Natural killer cell (primary cell): ENCODE measurements at regions of chr1 and their contacts with region 1.

Region 1: DNA sequence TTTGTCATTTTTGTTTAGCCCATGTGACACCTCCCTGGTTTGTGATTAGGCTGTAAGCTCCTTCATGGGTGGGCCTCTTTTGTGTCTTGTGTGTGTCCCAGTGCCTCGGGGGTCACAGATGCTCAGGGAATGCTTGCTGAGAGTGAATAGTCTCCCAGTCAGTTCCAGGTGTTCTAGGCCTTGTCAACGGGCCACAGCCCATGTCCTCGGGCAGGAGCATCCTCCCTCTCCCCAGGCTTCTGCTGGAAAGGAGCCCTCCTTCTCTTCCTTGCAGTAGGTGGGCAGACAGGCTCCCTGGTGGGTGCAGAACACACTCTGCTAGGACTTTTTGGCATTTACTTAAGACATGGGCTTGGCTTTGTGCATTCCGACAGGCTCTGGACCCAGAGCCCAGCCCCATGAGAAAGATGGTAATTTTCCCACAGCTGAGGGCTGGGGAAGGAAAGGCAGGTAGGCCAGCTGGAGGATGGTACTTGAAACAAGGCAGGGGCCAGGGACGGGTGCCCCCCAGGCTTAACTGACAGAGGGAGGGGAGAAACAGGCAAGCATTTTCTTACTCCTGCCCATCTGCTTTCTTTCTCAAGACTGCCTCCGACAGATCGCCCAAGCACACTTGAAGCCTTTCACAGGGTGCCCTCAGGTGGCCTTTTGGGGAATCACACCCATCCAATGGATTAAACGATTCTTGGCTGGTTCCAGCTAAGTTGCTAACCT is 7.1 kb upstream of the CPLANE2 start:
- DNase-seq: peak; percentile 67 to 87
- ATAC-seq: peak; percentile 86 to 97 (median 92)
- H3K4me3 ChIP-seq: no peak overlapping the region
- H3K4me3 Mint-ChIP-seq: no peak overlapping the region
- H3K27ac ChIP-seq: no peak overlapping the region
- H3K27ac Mint-ChIP-seq: no peak overlapping the region
- H3K4me1 ChIP-seq: peaks cover 9% of the 10 kb centered on the region
- H3K4me1 Mint-ChIP-seq: peaks cover 3 to 13% of the 10 kb centered on the region in 2 donors
- H3K27me3 ChIP-seq: no peaks in the 10 kb centered on the region
- H3K27me3 Mint-ChIP-seq: no peaks in the 10 kb centered on the region
- CTCF ChIP-seq: peak; percentile 71

Region 2: GRCh38 chr1:16009030-16009709 is 234.9 kb before region 1 on chr1:
- intact Hi-C with region 1: loop called (anchors 2 kb)
- DNase-seq: peak; percentile 71 to 83
- ATAC-seq: peak; percentile 32 to 74 (median 66)
- H3K4me3 ChIP-seq: no peak overlapping the region
- H3K4me3 Mint-ChIP-seq: no peak overlapping the region
- H3K27ac ChIP-seq: no peak overlapping the region
- H3K27ac Mint-ChIP-seq: no peak overlapping the region
- H3K4me1 ChIP-seq: peaks cover 23% of the 10 kb centered on the region
- H3K4me1 Mint-ChIP-seq: peaks cover 0 to 15% of the 10 kb centered on the region in 2 donors
- H3K27me3 ChIP-seq: no peaks in the 10 kb centered on the region
- H3K27me3 Mint-ChIP-seq: no peaks in the 10 kb centered on the region
- CTCF ChIP-seq: peak; percentile 98

Region 3: DNA sequence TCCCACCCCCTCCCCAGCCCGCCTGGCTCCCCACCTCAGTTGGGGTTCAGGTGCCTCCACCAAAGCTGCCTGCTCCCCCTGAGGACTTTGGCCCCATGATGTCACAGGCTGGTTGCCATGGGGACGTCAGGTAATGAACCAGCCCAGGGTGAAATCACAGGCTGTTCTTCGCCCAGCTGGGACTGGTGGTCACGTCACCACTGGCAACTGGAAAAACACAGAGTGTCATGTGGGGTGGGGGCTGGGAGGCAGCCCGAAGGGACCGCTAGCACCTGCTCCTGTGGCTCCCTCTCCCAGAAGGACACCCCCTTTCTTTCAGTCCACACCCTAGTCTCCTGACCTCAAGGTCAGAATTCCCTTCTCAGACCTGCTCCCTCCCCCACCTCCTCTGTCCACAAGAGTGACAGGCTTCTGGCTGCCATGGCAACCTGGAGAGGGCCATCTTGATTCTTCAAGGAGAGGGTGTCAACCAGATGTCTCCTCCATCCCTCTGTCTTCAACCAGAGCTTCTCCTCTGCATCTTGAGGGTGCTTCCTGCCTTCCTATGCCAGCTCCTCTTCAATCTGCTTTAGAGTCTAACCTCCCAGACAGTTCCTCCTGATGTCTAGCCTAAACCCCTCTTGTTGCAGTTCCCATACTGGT is 176.8 kb before region 1 on chr1:
- intact Hi-C with region 1: no loop called
- DNase-seq: no peak
- ATAC-seq: no peak
- H3K4me3 ChIP-seq: no peak overlapping the region
- H3K4me3 Mint-ChIP-seq: no peak overlapping the region
- H3K27ac ChIP-seq: no peak overlapping the region
- H3K27ac Mint-ChIP-seq: no peak overlapping the region
- H3K4me1 ChIP-seq: peaks cover 34% of the 10 kb centered on the region
- H3K4me1 Mint-ChIP-seq: peaks cover 21 to 32% of the 10 kb centered on the region in 2 donors
- H3K27me3 ChIP-seq: no peaks in the 10 kb centered on the region
- H3K27me3 Mint-ChIP-seq: peaks cover 6 to 22% of the 10 kb centered on the region in 2 donors
- CTCF ChIP-seq: no peak

Region 4: DNA sequence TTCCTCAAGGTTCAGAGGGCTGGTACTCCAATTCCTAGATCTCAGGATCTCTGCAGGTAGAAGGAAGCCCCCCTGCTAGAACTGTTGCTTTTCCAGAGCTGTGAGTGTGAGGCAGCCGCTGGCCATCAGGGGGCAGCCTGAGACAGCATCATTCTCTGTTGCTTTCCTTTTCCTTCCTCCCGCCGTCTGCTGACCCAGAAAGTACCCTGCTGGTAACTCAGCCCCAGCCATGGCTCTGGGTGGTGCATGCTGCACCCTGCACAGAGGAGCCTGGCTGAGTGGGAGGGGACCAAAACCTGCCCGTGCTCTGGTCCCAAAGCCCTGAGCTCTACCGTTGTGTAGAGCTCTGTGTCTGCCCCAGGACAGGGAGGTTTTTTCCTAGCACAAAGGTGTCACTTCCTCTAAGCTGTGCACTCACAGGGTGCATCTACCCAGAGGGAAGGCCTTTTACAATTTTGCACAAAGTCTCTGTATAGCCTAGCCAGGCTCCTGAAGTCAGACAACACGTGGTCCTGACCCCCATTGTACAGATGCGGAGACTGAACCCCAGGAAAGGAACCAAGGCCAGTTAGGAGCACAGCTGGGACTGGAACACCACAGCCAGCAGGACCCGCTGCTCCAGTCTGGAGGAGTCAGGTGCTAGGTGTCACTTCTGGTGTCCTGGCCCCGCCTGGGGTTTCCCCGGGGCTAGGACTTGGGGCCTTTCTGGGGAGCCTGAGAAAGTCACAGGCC is 165.0 kb before region 1 on chr1:
- intact Hi-C with region 1: loop called (anchors 1 kb)
- DNase-seq: peak; percentile 64 to 88
- ATAC-seq: peak; percentile 80 to 89 (median 88)
- H3K4me3 ChIP-seq: no peak overlapping the region
- H3K4me3 Mint-ChIP-seq: peak overlapping the region; percentile 82
- H3K27ac ChIP-seq: peak overlapping the region; percentile 31
- H3K27ac Mint-ChIP-seq: peak overlapping the region; percentile 50 to 73
- H3K4me1 ChIP-seq: peaks cover 21% of the 10 kb centered on the region
- H3K4me1 Mint-ChIP-seq: peaks cover 6 to 9% of the 10 kb centered on the region in 2 donors
- H3K27me3 ChIP-seq: peaks cover 4% of the 10 kb centered on the region
- H3K27me3 Mint-ChIP-seq: peaks cover 5 to 15% of the 10 kb centered on the region in 2 donors
- CTCF ChIP-seq: peak; percentile 78

Region 5: DNA sequence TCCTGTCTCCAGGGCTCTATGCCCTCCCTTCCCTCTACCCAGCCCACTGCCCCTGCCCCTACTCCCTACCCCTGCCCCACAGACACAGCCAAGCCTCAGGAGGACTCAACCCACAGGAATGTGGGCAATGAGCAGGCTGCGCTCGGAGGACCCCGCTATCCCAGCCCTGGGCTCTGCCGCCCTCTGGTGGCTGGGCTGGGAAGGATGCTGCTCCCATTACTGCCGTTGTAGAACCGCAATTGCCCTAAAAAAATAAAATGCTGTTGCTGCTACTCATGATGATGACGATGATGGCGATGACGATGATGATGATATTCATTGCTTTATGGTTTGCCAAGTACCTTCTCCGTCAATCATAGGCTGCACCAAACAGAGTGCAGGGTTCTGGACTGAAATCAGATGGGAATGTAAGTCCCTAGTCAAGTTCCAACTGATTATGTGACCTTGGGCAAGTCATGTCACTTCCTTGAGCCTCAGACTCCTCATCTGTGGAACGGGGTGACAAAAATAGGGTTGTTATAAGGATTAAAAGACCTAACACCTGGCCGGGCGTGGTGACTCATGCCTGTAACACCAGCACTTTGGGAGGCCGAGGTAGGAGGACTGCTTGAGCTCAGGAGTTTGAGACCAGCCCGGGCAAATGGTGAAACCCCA is 56.2 kb before region 1 on chr1:
- intact Hi-C with region 1: loop called (anchors 1 kb)
- DNase-seq: peak; percentile 77 to 90
- ATAC-seq: peak; percentile 85 to 97 (median 96)
- H3K4me3 ChIP-seq: no peak overlapping the region
- H3K4me3 Mint-ChIP-seq: no peak overlapping the region
- H3K27ac ChIP-seq: no peak overlapping the region
- H3K27ac Mint-ChIP-seq: no peak overlapping the region
- H3K4me1 ChIP-seq: peaks cover 4% of the 10 kb centered on the region
- H3K4me1 Mint-ChIP-seq: no peaks in the 10 kb centered on the region
- H3K27me3 ChIP-seq: peaks cover 5% of the 10 kb centered on the region
- H3K27me3 Mint-ChIP-seq: peaks cover 0 to 6% of the 10 kb centered on the region in 2 donors
- CTCF ChIP-seq: peak; percentile 92

Region 6: DNA sequence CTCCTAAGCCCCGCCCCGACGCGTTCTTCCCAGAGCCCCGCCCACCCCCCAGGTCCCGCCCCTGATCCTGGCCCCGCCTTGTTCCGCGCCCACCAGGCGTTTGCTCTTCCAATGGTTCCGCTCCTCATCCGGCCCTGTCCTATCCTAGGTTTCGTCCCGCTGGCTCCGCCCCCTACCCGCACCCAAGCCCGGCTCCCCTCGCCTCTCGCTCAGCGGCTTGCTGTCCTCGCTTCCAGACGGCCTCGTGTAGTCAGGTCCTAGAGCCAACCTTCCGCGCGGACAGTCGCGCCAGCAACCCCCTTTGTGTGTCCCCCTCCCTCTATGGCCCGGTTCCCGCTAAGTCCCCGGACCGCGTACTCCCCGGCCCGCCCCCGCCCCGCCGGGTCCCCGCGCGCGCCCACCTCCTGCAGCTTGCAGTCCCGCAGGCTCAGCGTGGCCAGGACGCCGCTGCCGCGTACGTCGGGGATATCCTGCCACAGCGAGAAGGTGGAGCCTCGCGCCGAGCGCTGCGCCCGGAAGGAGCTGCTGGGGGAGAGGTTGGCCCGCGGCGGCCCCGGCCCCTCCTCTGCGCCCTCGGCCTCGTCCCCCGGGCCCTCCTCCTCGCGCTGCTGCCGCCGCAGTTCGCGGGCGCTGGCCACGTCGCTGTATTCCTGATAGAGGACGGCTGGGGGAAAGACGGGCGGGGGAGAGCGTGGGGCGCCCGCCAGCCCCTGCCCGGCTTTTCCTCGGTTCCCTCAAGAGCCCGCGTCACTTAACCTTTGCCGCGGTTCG is 37.4 kb before region 1 on chr1:
- intact Hi-C with region 1: no loop called
- DNase-seq: peak; percentile 88 to 97
- ATAC-seq: peak; percentile 90 to 94 (median 91)
- H3K4me3 ChIP-seq: peak overlapping the region; percentile 70
- H3K4me3 Mint-ChIP-seq: peak overlapping the region; percentile 86
- H3K27ac ChIP-seq: peak overlapping the region; percentile 88
- H3K27ac Mint-ChIP-seq: peak overlapping the region; percentile 86 to 95
- H3K4me1 ChIP-seq: peaks cover 16% of the 10 kb centered on the region
- H3K4me1 Mint-ChIP-seq: peaks cover 0 to 34% of the 10 kb centered on the region in 2 donors
- H3K27me3 ChIP-seq: no peaks in the 10 kb centered on the region
- H3K27me3 Mint-ChIP-seq: no peaks in the 10 kb centered on the region
- CTCF ChIP-seq: no peak